ENCODE measurements at regions of chrX and their contacts with region 1.

Region 1: GRCh38 chrX:19904778-19905367 is 17.5 kb upstream of the SH3KBP1 start:
- DNase-seq: no peak
- H3K4me3 ChIP-seq: no peak overlapping the region
- H3K27ac ChIP-seq: no peak overlapping the region
- H3K27me3 ChIP-seq: peaks cover 0 to 45% (median 3%) of the 10 kb centered on the region in 45 donors
- CTCF ChIP-seq: peak in 55 of 56 donors; percentile 23 to 77 (median 61)

Region 2: GRCh38 chrX:19040373-19040772 is 864.5 kb before region 1 on chrX:
- intact Hi-C with region 1: no loop called
- DNase-seq: no peak
- H3K4me3 ChIP-seq: no peak overlapping the region
- H3K27ac ChIP-seq: no peak overlapping the region
- H3K27me3 ChIP-seq: peaks cover 0 to 35% (median 5%) of the 10 kb centered on the region in 45 donors
- CTCF ChIP-seq: peak in 42 of 56 donors; percentile 5 to 46 (median 26)

Region 3: GRCh38 chrX:19990556-19991349 is 85.9 kb after region 1 on chrX and contains the start of gene BCLAF3:
- intact Hi-C with region 1: loop called (anchors 2 to 10 kb)
- DNase-seq: peak; percentile 65 to 90 (median 83)
- H3K4me3 ChIP-seq: peak within 1 kb of the TSS; percentile 46 to 82 (median 70)
- H3K27ac ChIP-seq: peak within 1 kb of the TSS in 49 of 59 donors; percentile 17 to 90 (median 71)
- H3K27me3 ChIP-seq: peaks cover 0 to 30% (median 5%) of the 10 kb centered on the region in 45 donors
- CTCF ChIP-seq: peak; percentile 47 to 88 (median 76)
- total RNA-seq, gene BCLAF3: 15.5 to 27.7 (median 21.4) TPM

Region 4: DNA sequence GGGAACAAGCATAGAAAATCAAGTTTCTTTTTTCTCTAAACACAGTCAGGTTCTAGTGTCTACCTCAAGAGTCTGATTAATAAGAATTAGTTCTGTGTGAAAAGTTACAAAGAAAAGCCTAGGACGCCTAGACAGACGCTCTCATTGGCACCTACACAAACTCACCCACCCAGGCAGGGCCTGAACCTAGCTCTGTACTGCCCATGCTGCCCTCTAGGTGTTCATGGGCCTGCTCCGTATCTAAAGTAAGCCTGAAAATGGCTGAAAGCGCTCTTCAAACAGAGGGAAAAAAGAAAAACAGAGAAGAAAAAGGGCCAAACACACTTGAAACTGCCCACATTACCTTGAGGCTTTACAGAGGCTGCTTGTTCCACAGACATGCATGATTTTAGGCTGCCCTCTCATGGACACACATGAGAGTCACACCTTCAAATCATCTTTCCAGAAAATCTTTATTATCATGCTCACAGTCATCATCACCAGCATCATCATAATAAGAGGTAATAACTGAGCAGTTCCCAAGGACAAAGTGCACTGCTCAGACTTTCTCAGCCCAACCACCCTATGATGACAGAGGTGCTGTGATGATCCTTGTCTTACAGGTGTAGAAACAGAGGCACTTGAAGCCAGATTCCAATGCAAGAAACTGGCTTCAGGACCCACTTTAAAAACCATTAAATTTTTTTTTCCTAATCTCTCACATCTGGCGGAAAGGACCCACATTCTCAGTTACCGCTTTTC is 162.3 kb after region 1 on chrX:
- intact Hi-C with region 1: loop called in 1 of 2 experiments (anchors 10 kb)
- DNase-seq: peak in 1 of 10 donors; percentile 5
- H3K4me3 ChIP-seq: no peak overlapping the region
- H3K27ac ChIP-seq: peak overlapping the region in 1 of 59 donors; percentile 3
- H3K27me3 ChIP-seq: peaks cover 0 to 79% (median 16%) of the 10 kb centered on the region in 45 donors
- CTCF ChIP-seq: peak in 46 of 56 donors; percentile 17 to 63 (median 41)

Region 5: DNA sequence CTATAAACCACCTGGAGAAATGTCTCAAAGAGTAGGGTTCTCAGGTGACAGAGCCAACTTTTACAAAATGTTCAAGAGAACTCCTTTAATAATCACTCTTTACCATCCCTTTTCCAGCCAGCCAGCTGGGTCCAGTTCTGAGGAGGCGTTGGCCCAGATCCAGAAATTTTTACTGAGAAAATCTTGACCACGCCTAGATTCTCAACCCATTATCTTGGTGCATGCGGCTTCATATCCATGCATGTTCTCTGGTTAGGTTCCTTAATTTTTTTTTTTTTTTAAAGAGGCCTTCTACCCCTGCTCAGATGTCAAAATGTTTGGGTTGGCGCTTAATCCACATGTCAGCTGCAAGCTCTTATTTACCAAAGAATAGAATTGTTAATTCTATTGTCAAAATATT is 223.8 kb after region 1 on chrX:
- intact Hi-C with region 1: loop called in 1 of 2 experiments (anchors 10 kb)
- DNase-seq: no peak
- H3K4me3 ChIP-seq: no peak overlapping the region
- H3K27ac ChIP-seq: no peak overlapping the region
- H3K27me3 ChIP-seq: no peaks in the 10 kb centered on the region
- CTCF ChIP-seq: no peak